ENCODE measurements at regions of chr6 and their contacts with region 1.

Region 1: DNA sequence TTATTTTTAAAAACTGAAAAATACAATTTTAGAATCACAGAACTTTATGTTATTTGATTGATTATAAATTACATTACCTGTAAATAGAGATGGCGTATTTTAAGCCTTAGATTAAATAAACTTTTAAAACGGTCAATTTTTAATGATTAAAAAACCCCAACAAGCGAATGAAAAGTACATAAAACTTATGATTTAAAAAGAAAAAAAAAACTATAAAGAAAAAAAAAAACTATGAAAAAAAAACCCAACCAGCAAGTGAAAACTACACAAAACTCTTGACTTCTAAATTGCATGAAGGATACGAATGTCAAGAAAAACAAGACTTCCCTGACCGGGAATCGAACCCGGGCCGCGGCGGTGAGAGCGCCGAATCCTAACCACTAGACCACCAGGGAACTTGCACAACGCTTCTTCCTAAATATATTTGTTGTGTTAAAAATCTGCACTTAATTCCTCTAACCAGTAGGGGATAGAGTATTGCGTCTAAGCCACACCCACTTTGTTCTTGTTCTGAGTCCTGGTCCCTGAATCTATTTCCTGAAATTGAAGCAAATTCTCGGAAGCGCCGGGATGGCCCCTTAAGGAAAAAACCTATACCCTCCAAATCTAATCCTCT is 10.7 kb upstream of the NCOA7 start:
- DNase-seq: peak; percentile 77
- ATAC-seq: peak; percentile 79
- H3K4me3 Mint-ChIP-seq: no peak overlapping the region
- H3K27ac Mint-ChIP-seq: no peak overlapping the region
- H3K4me1 Mint-ChIP-seq: peaks cover 4% of the 10 kb centered on the region
- H3K27me3 Mint-ChIP-seq: no peaks in the 10 kb centered on the region
- CTCF ChIP-seq: no peak

Region 2: DNA sequence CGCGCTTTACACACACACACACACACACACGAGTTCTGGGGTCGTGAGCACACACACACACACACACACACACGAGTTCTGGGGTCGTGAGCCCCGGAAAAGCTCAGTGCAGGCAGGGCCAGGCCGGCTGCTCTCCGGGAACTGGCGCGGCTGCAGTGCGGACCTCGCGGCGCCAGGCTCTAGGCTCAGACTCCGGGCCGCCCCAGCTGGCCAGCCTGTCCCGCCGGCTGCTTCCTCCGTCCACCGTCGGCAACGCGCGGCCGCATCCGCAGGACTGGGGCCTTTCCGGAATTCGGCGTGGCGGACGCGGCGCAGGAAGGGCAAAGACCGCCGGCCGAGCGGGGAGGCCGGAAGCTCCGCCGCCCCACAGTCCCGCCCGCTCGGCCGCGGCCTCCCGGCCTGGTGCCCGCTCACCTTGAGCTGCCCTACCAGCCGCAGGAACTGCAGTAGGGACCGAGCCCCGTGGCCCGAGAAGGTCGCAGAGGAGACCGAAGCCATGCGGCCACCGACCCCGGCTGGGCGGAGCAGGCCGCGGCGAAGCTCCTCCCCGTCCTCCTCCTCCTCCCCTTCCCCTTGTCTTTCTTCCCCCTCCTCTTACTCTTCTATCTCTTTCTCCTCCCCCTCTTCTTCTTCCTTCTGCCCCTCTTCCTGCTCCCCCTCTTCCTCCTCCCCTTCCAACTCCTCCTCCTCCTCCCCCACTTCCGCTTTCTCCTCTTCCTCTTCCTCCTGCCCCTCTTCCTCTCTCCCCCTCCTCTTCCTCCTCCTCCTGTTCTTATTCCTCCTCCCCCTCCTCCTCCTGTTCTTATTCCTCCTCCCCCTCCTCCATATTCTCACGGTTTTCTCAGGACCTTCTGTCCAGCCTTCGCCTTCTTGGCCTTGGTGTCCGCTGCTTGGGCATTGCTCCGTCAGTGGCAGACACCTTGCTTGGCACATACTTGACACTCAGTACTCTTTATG is 478.3 kb before region 1 on chr6 and contains the start of gene HDDC2:
- CTCF ChIA-PET with region 1: no interaction called
- POLR2A ChIA-PET with region 1: interaction called, 13 read pairs
- intact Hi-C with region 1: no loop called
- DNase-seq: peak; percentile 53
- ATAC-seq: peak; percentile 78
- H3K4me3 Mint-ChIP-seq: peak within 1 kb of the TSS; percentile 89
- H3K27ac Mint-ChIP-seq: peak within 1 kb of the TSS; percentile 78
- H3K4me1 Mint-ChIP-seq: peaks cover 38% of the 10 kb centered on the region
- H3K27me3 Mint-ChIP-seq: peaks cover 14% of the 10 kb centered on the region
- CTCF ChIP-seq: no peak
- total RNA-seq, gene HDDC2: 53.1 and 55.8 TPM in 2 replicates

Region 3: GRCh38 chr6:125790358-125791150 is 10.5 kb after region 1 on chr6 and contains the start of gene NCOA7:
- CTCF ChIA-PET with region 1: interaction called, 54 read pairs
- POLR2A ChIA-PET with region 1: interaction called, 145 read pairs
- intact Hi-C with region 1: loop called (anchors 1 kb)
- DNase-seq: peak; percentile 74
- ATAC-seq: peak; percentile 79
- H3K4me3 Mint-ChIP-seq: peak within 1 kb of the TSS; percentile 89
- H3K27ac Mint-ChIP-seq: peak within 1 kb of the TSS; percentile 95
- H3K4me1 Mint-ChIP-seq: peaks cover 50% of the 10 kb centered on the region
- H3K27me3 Mint-ChIP-seq: no peaks in the 10 kb centered on the region
- CTCF ChIP-seq: no peak
- total RNA-seq, gene NCOA7: 29.2 and 33.4 TPM in 2 replicates

Region 4: DNA sequence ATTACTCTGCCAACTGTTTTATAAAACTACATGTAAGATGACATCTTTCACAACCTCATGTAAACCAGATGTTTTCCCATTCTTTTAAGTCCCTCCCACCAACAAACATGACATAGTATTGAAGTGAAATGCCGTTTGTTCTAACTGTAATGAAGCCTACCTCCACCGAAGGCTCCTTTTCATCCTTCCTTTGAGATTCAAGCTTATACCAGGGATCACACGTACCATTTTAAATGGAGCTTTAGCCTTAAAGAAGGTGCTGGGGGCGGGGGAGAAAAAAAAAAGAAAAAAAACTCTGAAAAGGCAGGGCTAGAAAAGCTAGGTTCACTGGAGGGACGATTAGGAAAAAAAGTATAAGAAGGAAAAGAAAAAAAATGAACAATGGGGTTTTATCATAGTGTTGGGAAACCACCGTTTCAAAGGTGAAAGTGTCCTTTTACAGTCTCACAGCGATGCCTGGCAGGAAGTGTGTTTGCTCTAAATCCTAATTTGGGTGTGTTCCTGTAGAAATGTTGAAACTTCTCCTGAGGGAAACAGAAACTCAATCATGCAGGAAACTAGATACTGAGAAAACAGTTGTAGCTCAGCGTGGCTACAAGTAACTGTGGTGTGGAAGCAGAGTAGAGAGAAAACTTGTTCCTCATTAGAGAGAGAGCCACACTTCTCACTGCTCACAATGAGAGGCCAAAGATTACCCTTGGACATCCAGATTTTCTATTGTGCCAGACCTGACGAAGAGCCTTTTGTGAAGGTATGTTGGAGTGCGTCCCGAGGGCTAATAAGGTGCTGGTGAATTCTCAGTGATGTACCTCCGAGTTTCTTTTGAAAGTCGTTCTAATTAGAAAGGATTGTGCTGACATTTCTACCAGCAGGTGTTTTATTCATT is 138.9 kb after region 1 on chr6:
- CTCF ChIA-PET with region 1: interaction called, 6 read pairs
- POLR2A ChIA-PET with region 1: interaction called, 8 read pairs
- intact Hi-C with region 1: loop called (anchors 1 kb)
- DNase-seq: no peak
- ATAC-seq: peak; percentile 90
- H3K4me3 Mint-ChIP-seq: peak overlapping the region; percentile 80
- H3K27ac Mint-ChIP-seq: peak overlapping the region; percentile 90
- H3K4me1 Mint-ChIP-seq: peaks cover 28% of the 10 kb centered on the region
- H3K27me3 Mint-ChIP-seq: no peaks in the 10 kb centered on the region
- CTCF ChIP-seq: no peak

Region 5: GRCh38 chr6:127342946-127343808 is 1563.1 kb after region 1 on chr6 and contains the start of gene ECHDC1:
- CTCF ChIA-PET with region 1: no interaction called
- POLR2A ChIA-PET with region 1: no interaction called
- intact Hi-C with region 1: loop called (anchors 5 kb)
- DNase-seq: peak; percentile 57
- ATAC-seq: peak; percentile 69
- H3K4me3 Mint-ChIP-seq: no peak within 1 kb of the TSS
- H3K27ac Mint-ChIP-seq: no peak within 1 kb of the TSS
- H3K4me1 Mint-ChIP-seq: peaks cover 12% of the 10 kb centered on the region
- H3K27me3 Mint-ChIP-seq: no peaks in the 10 kb centered on the region
- CTCF ChIP-seq: no peak
- total RNA-seq, gene ECHDC1: 57.3 and 59.7 TPM in 2 replicates